ENCODE measurements at regions of chr5 and their contacts with region 1.

Region 1: GRCh38 chr5:33794550-33795181 is 97.1 kb downstream of the ADAMTS12 start:
- DNase-seq: no peak
- H3K4me3 ChIP-seq: no peak overlapping the region
- CTCF ChIP-seq: no peak
- POLR2A ChIP-seq: no peak

Region 2: GRCh38 chr5:32562843-32563242 is 1231.8 kb before region 1 on chr5:
- intact Hi-C with region 1: loop called (anchors 5 kb)
- DNase-seq: no peak
- H3K4me3 ChIP-seq: no peak overlapping the region
- CTCF ChIP-seq: no peak
- POLR2A ChIP-seq: no peak

Region 3: DNA sequence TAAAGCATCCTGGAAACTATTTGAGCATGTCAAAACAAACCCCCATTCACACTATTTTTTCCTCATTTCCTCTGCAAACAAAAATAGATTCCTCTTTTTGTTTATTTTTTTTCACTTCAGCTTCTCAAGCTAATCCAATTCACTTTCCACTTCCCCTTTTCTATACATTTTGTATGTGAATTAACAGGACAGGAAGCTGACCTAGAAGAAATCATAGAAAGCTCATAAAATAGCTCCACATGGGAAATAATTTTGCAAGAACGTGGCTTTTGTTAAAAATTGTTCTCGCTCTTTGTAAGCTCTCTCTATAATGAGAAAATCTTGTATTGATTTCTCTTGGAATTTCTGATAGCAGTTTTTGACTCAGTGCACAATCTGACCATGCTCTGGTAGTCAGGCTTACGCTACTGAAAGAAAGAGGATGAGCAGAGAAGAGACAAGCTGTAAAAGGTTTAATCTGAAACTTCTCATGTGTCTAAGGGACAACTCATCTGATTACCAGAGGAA is 118.7 kb before region 1 on chr5:
- intact Hi-C with region 1: no loop called
- DNase-seq: no peak
- H3K4me3 ChIP-seq: no peak overlapping the region
- CTCF ChIP-seq: no peak
- POLR2A ChIP-seq: no peak